ENCODE measurements at regions of chr13 and their contacts with region 1.

Region 1: DNA sequence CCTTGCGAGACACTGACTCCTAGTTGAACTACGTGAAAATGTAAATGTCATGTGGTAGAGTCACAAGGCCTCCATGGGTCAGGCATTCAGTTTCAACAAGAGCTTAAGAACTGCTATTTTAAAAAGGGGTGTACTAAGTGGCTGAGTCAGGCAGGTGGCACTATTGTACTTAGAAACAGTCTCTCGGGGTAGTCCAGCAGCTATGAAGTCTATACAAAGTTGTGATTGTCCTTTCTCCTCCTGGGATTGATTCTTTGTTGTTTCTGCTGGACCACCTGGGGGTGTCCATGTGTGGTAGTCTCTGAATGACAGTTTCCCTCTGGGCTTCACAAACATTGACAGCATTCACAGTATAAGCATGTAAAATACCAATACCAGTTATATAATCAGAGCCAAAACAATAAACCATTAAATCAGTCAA is 33.0 kb downstream of the UGGT2 start:
- DNase-seq: no peak
- ATAC-seq: peak; percentile 71 to 74

Region 2: DNA sequence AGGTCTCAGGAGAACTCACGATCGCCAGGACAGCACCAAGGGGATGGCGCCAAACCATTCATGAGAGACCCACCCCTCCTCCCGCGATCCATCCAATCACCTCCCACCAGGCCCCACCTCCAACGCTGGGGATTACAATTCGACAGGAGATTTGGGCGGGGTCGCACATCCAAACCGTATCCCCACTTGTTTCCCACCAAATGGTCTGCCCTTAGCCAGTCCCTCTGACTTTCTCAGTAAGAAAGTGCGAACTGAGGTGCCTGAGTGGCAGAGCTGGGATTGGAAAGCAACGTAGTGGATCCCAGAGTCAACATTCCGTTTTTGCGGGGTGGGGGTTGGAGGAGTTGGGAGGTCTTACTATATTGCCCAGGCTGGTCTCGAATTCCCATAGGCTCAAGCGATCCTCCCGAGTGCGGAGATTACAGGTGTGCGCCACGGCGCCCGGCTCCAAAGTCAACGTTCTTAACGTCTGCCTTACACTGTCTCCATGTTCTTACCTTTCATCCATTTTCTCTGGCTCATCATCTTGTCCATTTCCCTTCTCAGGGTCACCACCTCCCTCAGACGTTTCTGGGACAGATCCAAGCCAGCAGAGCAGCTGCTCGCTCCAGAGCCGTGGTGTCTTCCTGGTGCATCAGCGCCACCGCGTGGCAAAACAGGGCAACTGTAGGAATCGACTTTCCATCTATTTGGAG is 616.2 kb before region 1 on chr13:
- intact Hi-C with region 1: no loop called
- DNase-seq: peak; percentile 80
- ATAC-seq: peak; percentile 93 to 95

Region 3: GRCh38 chr13:95457294-95457693 is 562.9 kb before region 1 on chr13:
- intact Hi-C with region 1: no loop called
- DNase-seq: no peak
- ATAC-seq: no peak

Region 4: DNA sequence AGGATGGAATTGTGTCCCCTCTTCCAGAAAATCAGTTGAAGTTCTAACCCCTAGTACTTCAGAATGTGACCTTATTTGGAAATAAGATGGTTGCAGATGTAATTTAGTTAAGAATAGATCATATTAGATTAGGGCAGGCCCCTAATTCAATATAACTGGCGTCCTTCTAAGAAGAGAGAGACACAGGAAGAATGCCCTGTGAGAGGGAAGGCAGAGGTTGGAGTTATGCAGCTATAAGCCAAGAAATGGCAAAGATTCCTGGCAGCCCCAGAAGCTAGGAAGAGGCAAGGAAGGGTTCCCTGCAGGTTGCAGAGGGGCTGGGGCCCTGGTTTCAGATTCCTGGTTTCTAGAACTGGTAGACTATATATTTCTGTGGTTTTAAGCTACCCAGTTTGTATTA is 99.8 kb after region 1 on chr13:
- intact Hi-C with region 1: no loop called
- DNase-seq: no peak
- ATAC-seq: no peak

Region 5: DNA sequence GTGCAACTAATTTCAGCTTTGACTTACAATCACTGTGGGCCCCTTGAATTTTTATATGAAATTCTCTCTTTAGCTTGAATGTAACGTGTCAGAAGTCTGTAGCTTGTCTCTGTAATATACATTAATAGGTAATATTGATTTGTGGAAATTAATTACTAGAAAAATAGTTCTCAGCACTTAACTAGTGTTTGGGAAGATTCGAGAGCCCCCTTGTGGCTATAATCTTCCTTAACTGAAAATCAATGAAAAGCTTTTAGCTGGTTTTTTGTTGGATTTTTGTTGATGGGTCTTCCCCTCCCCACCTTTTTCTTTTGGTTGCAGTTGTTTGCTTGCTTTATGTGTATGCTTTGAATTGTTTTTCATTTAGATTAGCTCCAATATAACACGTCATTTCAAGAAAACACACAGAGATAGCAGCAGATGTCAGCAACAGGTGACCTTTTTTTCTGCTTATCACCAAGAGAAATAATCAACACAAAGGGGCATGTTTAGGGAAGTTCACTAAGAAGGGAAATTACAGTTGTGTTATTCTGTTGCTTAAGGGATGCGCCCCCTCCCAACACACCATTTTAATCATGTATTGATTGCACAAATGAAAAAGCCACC is 797.3 kb after region 1 on chr13:
- intact Hi-C with region 1: loop called in 1 of 2 experiments (anchors 2 kb)
- DNase-seq: no peak
- ATAC-seq: no peak

Region 6: GRCh38 chr13:96958286-96958891 is 938.2 kb after region 1 on chr13:
- intact Hi-C with region 1: loop called (anchors 2 to 10 kb)
- DNase-seq: no peak
- ATAC-seq: no peak

Measured in left cardiac atrium (tissue), 4 donors.